ENCODE measurements at regions of chr4 and their contacts with region 1.

Region 1: GRCh38 chr4:184263910-184264732 is 46.4 kb upstream of the ENPP6 start:
- DNase-seq: peak; percentile 95
- H3K4me3 Mint-ChIP-seq: no peak overlapping the region
- H3K27ac Mint-ChIP-seq: no peak overlapping the region
- H3K4me1 Mint-ChIP-seq: peaks cover 11% of the 10 kb centered on the region
- H3K27me3 Mint-ChIP-seq: no peaks in the 10 kb centered on the region
- CTCF ChIP-seq: peak; percentile 78

Region 2: GRCh38 chr4:184250795-184251669 is 13.1 kb before region 1 on chr4:
- CTCF ChIA-PET with region 1: interaction called, 53 read pairs
- POLR2A ChIA-PET with region 1: no interaction called
- intact Hi-C with region 1: no loop called
- DNase-seq: peak; percentile 73
- H3K4me3 Mint-ChIP-seq: no peak overlapping the region
- H3K27ac Mint-ChIP-seq: no peak overlapping the region
- H3K4me1 Mint-ChIP-seq: peaks cover 10% of the 10 kb centered on the region
- H3K27me3 Mint-ChIP-seq: no peaks in the 10 kb centered on the region
- CTCF ChIP-seq: peak; percentile 45

Region 3: GRCh38 chr4:184287697-184288255 is 23.7 kb after region 1 on chr4:
- CTCF ChIA-PET with region 1: interaction called, 34 read pairs
- POLR2A ChIA-PET with region 1: interaction called, 6 read pairs
- intact Hi-C with region 1: loop called (anchors 2 kb)
- DNase-seq: peak; percentile 43
- H3K4me3 Mint-ChIP-seq: no peak overlapping the region
- H3K27ac Mint-ChIP-seq: no peak overlapping the region
- H3K4me1 Mint-ChIP-seq: no peaks in the 10 kb centered on the region
- H3K27me3 Mint-ChIP-seq: no peaks in the 10 kb centered on the region
- CTCF ChIP-seq: no peak

Region 4: GRCh38 chr4:184417802-184418511 is 153.8 kb after region 1 on chr4:
- CTCF ChIA-PET with region 1: interaction called, 32 read pairs
- POLR2A ChIA-PET with region 1: interaction called, 9 read pairs
- intact Hi-C with region 1: no loop called
- DNase-seq: peak; percentile 95
- H3K4me3 Mint-ChIP-seq: peak overlapping the region; percentile 47
- H3K27ac Mint-ChIP-seq: peak overlapping the region; percentile 47
- H3K4me1 Mint-ChIP-seq: peaks cover 24% of the 10 kb centered on the region
- H3K27me3 Mint-ChIP-seq: no peaks in the 10 kb centered on the region
- CTCF ChIP-seq: no peak

Region 5: DNA sequence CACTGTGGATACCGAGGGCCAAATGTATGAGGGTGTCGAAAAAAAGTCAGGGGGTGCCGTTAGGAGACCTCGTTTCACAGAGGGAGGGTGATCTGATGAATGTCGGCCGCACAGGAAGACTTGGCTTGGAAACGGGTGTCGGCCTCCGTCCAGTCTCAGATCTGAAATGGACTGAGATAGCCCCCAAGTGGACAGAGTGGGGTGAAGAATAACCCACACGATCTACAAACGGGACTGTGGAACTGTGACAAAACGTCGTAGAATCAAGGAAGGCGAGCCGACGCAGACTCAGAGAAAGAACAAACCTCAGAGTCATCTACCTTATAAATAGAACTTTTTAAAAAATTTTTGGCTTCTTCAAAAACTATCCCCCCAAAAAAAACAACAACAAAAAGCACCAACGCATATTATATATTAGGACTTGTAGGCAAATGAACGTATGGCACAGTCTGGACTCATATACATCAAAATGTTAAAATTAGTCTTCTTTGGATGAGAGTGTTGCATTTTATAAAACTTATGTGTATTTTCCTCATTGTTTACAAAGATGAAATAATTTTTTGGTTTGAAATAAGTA is 274.0 kb after region 1 on chr4:
- CTCF ChIA-PET with region 1: interaction called, 43 read pairs
- POLR2A ChIA-PET with region 1: interaction called, 84 read pairs
- intact Hi-C with region 1: loop called (anchors 1 kb)
- DNase-seq: peak; percentile 94
- H3K4me3 Mint-ChIP-seq: peak overlapping the region; percentile 93
- H3K27ac Mint-ChIP-seq: peak overlapping the region; percentile 99
- H3K4me1 Mint-ChIP-seq: peaks cover 18% of the 10 kb centered on the region
- H3K27me3 Mint-ChIP-seq: no peaks in the 10 kb centered on the region
- CTCF ChIP-seq: peak; percentile 66

Region 6: DNA sequence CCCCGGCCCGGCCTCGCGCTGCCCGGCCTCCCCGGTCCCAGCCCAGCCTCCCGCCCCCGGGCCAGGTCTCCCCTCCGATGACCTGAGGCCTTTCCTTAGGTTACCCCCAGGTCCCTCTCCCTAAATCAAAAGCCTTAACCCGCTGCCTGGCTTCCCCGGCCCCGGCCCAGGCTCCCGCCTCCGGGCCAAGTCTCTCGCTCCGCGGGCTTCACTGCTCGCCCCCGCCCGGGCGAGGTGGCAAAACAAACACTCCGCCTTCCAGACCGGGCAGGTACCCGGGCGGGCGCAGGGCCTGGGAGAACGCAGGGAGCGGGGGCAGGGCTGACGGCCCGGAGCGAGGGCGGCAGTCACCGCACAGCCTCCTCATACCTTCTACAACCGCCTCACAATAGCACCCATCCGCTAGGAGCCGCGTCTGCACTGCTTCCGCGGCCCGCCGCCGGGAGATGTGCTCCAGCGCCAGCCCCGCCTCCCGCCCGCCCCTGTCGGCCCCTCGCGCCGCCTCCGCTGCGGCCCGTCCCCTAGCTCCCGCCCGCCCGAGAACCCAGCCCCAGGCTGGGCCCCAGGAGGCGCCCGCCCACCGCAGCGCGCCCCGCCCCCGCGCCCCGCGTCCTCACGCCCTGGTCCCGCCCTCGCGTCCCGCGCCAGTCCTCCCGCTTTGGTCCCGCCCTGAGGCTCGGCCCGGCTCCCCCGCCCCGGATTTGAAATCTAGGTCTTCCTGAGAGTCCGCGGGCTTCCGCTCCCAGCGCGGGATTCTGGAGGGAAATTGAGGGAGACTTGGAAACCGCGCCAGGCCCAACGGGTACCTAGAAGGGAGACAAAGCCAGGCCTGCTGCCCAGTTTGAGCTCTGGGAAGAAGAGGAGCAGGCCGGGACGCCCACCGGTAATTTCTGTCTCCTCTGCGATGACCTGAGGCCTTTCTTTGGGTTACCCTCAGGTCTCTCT is 385.2 kb after region 1 on chr4 and contains the starts of genes CASP3 and PRIMPOL:
- CTCF ChIA-PET with region 1: interaction called, 5 read pairs
- POLR2A ChIA-PET with region 1: interaction called, 4 read pairs
- intact Hi-C with region 1: loop called (anchors 5 kb)
- DNase-seq: peak; percentile 94
- H3K4me3 Mint-ChIP-seq: peak within 1 kb of the TSS; percentile 81
- H3K27ac Mint-ChIP-seq: peak within 1 kb of the TSS; percentile 78
- H3K4me1 Mint-ChIP-seq: peaks cover 37% of the 10 kb centered on the region
- H3K27me3 Mint-ChIP-seq: no peaks in the 10 kb centered on the region
- CTCF ChIP-seq: no peak
- total RNA-seq, gene CASP3: 27.4 and 28.6 TPM in 2 replicates
- total RNA-seq, gene PRIMPOL: 19.2 and 20.7 TPM in 2 replicates

Region 7: GRCh38 chr4:185096032-185096653 is 832.0 kb after region 1 on chr4:
- CTCF ChIA-PET with region 1: interaction called, 4 read pairs
- POLR2A ChIA-PET with region 1: no interaction called
- intact Hi-C with region 1: loop called (anchors 10 kb)
- DNase-seq: peak; percentile 74
- H3K4me3 Mint-ChIP-seq: no peak overlapping the region
- H3K27ac Mint-ChIP-seq: no peak overlapping the region
- H3K4me1 Mint-ChIP-seq: no peaks in the 10 kb centered on the region
- H3K27me3 Mint-ChIP-seq: no peaks in the 10 kb centered on the region
- CTCF ChIP-seq: peak; percentile 52

Measured in MCF 10A (cell line).